Activated CD8-positive, alpha-beta T cell treated with anti-CD3 and anti-CD28 coated beads for 36 hours (primary cell): ENCODE measurements at regions of chr11 and their contacts with region 1.

Region 1: DNA sequence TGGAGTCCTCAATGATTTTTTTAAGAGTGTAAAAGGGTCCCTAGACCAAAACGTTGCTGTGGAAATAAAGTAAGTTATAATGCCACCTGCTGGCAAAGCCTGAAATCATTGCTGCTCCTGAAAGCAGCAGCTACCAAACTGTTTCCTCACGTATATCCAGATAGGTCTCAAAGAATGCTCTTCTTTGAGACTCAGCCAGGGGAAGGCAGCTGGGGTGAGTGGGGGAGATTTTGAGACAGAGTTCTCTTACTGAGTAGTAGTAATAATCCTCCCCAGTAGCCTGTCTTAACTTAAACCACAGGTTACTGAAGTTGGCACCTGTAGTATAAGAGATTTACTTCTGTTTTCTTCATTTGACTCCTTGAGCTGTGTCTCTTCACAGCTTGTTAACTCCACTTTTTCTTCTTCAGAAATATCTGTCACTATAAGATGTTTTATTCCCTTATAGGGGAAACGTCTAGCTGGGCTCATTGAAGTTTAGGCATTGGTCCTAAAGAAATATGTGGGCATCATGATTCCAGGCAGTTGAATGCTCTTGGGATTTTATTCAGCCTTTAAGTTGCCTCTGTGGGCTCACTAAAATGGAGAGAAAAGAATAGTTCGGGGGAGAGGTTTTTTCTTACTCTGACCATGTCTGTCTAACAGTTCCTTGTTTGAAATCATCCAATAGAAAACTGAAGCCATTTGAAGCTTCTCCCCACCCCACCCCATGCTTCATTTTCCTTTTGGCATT is 77.9 kb downstream of the BTBD10 start:
- DNase-seq: peak; percentile 62
- ATAC-seq: peak; percentile 47
- H3K4me3 Mint-ChIP-seq: no peak overlapping the region
- H3K27ac Mint-ChIP-seq: peak overlapping the region; percentile 53
- H3K4me1 Mint-ChIP-seq: peaks cover 5% of the 10 kb centered on the region
- H3K27me3 Mint-ChIP-seq: no peaks in the 10 kb centered on the region
- CTCF ChIP-seq: peak; percentile 61

Region 2: GRCh38 chr11:13210424-13210823 is 174.7 kb before region 1 on chr11:
- CTCF ChIA-PET with region 1: interaction called, 15 read pairs
- POLR2A ChIA-PET with region 1: no interaction called
- intact Hi-C with region 1: no loop called
- DNase-seq: peak; percentile 59
- ATAC-seq: no peak
- H3K4me3 Mint-ChIP-seq: no peak overlapping the region
- H3K27ac Mint-ChIP-seq: no peak overlapping the region
- H3K4me1 Mint-ChIP-seq: peaks cover 30% of the 10 kb centered on the region
- H3K27me3 Mint-ChIP-seq: no peaks in the 10 kb centered on the region
- CTCF ChIP-seq: peak; percentile 47

Region 3: DNA sequence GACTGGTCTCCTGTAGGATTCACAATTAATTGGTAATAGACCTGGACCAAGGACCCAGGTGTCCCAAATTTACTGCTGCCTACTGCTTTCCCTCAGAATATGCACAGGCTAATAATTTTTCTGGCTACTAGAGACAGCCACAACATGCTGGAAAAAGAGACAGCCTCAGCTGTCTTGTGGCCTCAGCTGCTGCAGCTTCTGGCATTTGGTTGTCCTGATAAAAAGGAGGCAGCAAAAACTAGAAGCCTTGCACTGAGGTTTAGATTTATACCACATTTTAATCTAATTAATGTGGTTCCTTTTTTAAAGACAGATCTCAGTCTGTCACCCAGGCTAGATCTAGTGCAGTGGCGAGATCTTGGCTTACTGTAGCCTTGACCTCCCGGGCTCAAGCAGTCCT is 11.9 kb before region 1 on chr11:
- CTCF ChIA-PET with region 1: interaction called, 14 read pairs
- POLR2A ChIA-PET with region 1: interaction called, 4 read pairs
- intact Hi-C with region 1: no loop called
- DNase-seq: no peak
- ATAC-seq: no peak
- H3K4me3 Mint-ChIP-seq: no peak overlapping the region
- H3K27ac Mint-ChIP-seq: no peak overlapping the region
- H3K4me1 Mint-ChIP-seq: no peaks in the 10 kb centered on the region
- H3K27me3 Mint-ChIP-seq: no peaks in the 10 kb centered on the region
- CTCF ChIP-seq: no peak

Region 4: GRCh38 chr11:13405220-13405619 is 20.1 kb after region 1 on chr11:
- CTCF ChIA-PET with region 1: interaction called, 10 read pairs
- POLR2A ChIA-PET with region 1: no interaction called
- intact Hi-C with region 1: no loop called
- DNase-seq: no peak
- ATAC-seq: no peak
- H3K4me3 Mint-ChIP-seq: no peak overlapping the region
- H3K27ac Mint-ChIP-seq: no peak overlapping the region
- H3K4me1 Mint-ChIP-seq: no peaks in the 10 kb centered on the region
- H3K27me3 Mint-ChIP-seq: no peaks in the 10 kb centered on the region
- CTCF ChIP-seq: no peak